ENCODE measurements at regions of chr6 and their contacts with region 1.

Region 1: DNA sequence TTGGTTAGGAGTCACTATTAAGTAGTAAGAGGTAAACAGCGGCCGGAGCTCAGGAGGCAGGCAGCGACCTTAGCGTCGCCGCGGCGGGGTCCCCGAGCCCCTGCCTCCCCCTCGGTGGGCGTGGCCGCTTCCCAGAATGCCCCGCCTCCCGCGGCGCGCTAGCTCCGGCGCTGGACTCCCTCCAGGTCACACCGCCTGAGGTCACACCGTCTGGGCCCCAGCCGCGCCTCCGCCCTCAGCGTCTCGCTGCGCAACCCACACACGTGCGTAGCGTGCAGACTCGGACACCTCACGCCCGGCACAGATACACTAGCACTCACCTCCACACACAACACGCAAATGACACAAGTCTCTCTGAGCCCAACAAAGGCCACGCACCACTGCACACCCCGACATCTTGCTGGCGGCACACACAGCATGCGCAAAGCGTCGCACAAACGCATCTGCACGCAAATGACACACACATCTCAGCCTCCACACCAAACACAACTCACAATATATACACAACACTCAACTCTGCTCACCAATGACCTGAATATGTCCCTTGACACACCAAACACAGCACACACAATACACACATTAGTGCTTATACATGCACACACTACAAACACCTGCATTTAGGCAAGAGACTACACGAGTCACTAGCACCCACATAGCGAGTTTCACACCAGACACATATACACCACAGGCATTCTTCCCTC is 17.6 kb upstream of the CDKN1A start:
- DNase-seq: no peak
- H3K4me3 Mint-ChIP-seq: no peak overlapping the region
- H3K27ac Mint-ChIP-seq: no peak overlapping the region
- H3K4me1 Mint-ChIP-seq: peaks cover 28% of the 10 kb centered on the region
- H3K27me3 Mint-ChIP-seq: no peaks in the 10 kb centered on the region
- CTCF ChIP-seq: no peak

Region 2: GRCh38 chr6:36642913-36643817 is 17.8 kb before region 1 on chr6:
- CTCF ChIA-PET with region 1: interaction called, 9 read pairs
- POLR2A ChIA-PET with region 1: interaction called, 43 read pairs
- intact Hi-C with region 1: no loop called
- DNase-seq: peak; percentile 95
- H3K4me3 Mint-ChIP-seq: no peak overlapping the region
- H3K27ac Mint-ChIP-seq: peak overlapping the region; percentile 31
- H3K4me1 Mint-ChIP-seq: peaks cover 14% of the 10 kb centered on the region
- H3K27me3 Mint-ChIP-seq: no peaks in the 10 kb centered on the region
- CTCF ChIP-seq: no peak

Region 3: GRCh38 chr6:36947570-36948351 is 286.8 kb after region 1 on chr6:
- CTCF ChIA-PET with region 1: no interaction called
- POLR2A ChIA-PET with region 1: no interaction called
- intact Hi-C with region 1: no loop called
- DNase-seq: no peak
- H3K4me3 Mint-ChIP-seq: no peak overlapping the region
- H3K27ac Mint-ChIP-seq: no peak overlapping the region
- H3K4me1 Mint-ChIP-seq: peaks cover 16% of the 10 kb centered on the region
- H3K27me3 Mint-ChIP-seq: peaks cover 16% of the 10 kb centered on the region
- CTCF ChIP-seq: no peak